Left ventricle myocardium superior (tissue), 1 donor: ENCODE measurements at regions of chr16 and their contacts with region 1.

Region 1: GRCh38 chr16:4350787-4351659 is at the start of gene PAM16:
- DNase-seq: peak; percentile 99
- ATAC-seq: peak; percentile 95
- total RNA-seq, gene PAM16: 70.0 TPM

Region 2: GRCh38 chr16:4402439-4403132 is 51.6 kb after region 1 on chr16:
- intact Hi-C with region 1: loop called (anchors 10 kb)
- DNase-seq: peak; percentile 93
- ATAC-seq: peak; percentile 93

Region 3: DNA sequence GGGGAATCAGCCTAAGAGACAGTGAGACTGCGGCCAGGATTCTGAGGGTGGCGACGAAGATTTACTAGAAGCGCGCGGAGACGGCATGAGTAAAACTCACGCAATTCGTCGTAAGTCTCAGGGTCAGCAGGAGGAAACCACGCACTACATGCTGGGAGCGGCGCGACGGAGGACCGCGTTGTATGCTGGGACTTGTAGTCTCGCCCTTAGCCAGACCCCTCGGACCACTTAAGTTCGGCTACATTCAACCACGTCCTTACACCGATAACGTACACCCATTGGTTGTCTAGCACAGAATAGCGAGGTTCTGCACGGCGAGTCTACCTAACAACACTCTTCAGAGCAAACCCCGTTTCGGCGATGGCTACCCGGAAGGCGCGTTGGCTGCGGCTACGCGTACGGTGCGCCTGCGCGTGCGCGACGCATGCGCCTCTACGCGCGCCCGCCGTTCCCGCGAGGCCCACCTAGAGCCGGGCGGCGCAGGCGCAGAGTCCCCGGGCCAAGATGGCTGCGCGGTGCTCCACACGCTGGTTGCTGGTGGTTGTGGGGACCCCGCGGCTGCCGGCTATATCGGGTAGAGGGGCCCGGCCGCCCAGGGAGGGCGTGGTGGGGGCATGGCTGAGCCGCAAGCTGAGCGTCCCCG is 74.5 kb after region 1 on chr16 and contains the start of gene DNAJA3:
- intact Hi-C with region 1: no loop called
- DNase-seq: peak; percentile 98
- ATAC-seq: peak; percentile 98
- total RNA-seq, gene DNAJA3: 83.9 TPM